Esophagus muscularis mucosa (tissue), 4 donors: ENCODE measurements at regions of chr17 and their contacts with region 1.

Region 1: DNA sequence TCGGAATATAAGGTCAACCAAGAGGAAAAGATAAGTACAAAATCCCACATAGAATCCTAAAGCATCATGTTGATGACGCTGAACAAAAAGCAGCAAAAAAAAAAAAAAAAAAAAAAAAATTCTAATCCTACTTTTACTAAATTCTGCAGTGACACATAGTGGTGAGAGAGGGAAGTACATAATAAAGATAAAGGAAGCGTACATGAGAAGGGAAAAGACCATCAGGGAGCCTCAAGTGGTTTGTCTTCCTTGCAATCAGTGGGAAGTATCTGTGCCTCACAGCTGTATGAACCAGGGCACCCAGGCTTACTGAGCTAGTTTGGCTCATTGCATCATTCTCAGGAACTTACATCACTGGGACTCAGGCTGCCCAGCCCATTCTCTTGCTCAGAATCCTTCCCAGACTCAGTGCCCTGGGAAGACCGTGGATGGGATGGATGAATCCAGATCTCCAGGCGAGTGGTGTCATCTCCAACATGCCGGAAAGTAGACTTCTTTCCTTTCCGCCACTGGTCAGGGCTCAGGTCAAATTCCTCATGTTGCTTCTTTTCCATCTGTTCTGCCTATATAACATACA is 21.2 kb downstream of the SMG6 start:
- DNase-seq: no peak
- H3K4me3 ChIP-seq: no peak overlapping the region
- H3K27ac ChIP-seq: peak overlapping the region in 3 of 4 donors; percentile 36 to 54 (median 38)
- H3K4me1 ChIP-seq: peaks cover 0 to 6% (median 1%) of the 10 kb centered on the region in 4 donors
- H3K27me3 ChIP-seq: no peaks in the 10 kb centered on the region
- CTCF ChIP-seq: peak; percentile 58 to 71 (median 67)
- EP300 ChIP-seq: no peak
- POLR2A ChIP-seq: no peak

Region 2: GRCh38 chr17:2244545-2245525 is 37.5 kb before region 1 on chr17:
- intact Hi-C with region 1: loop called (anchors 5 kb)
- DNase-seq: peak; percentile 96
- H3K4me3 ChIP-seq: no peak overlapping the region
- H3K27ac ChIP-seq: peak overlapping the region; percentile 56 to 74 (median 69)
- H3K4me1 ChIP-seq: peaks cover 6 to 51% (median 36%) of the 10 kb centered on the region in 4 donors
- H3K27me3 ChIP-seq: no peaks in the 10 kb centered on the region
- CTCF ChIP-seq: peak; percentile 98
- EP300 ChIP-seq: no peak
- POLR2A ChIP-seq: no peak